PC-3 (cell line): ENCODE measurements at regions of chr5 and their contacts with region 1.

Region 1: DNA sequence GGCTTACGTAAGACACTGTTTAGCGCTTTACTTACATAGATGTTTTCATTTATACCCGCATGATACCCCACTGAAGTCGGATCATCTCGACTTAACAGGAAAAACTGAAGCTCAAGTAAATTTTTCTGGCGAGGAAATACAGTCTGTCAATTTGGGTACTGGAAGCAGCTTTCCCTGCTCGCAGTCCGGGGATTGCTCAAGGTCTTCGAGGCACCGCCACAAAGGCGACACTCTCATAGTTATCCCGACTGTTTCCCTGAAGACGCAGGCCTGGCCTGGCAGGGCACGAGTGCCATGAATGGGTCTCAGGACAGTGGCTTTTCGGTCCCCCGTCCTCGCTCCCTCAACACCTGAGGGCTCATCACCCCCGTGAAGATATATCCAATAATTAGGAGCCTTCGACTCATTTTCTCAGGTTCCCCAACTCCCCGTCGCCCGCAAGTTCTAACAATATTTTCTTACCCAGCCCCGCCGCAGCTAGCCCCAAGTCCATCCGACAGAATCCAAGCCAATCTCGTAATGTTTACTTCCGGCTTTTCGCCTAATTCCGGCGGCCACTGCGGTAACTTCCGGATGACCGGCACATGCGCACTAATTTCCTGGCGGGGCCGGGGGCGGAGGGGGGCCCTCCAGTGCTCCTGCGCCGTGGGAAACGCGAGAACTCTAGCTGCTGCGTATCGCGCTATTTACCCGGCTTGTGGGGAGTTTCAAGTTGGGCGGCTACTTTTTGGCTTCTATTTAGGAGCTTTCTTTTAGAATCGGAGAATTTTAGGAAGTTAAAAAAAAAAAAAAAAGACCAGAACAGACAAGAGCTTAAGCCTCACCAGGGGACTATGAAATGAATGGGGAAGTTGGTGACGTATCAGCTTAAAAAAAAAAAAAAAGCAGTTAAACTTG is at the start of gene SLU7:
- DNase-seq: peak; percentile 95
- ATAC-seq: peak; percentile 66
- H3K4me3 ChIP-seq: peak within 1 kb of the TSS; percentile 94
- H3K27ac ChIP-seq: peak within 1 kb of the TSS; percentile 60
- H3K4me1 ChIP-seq: peaks cover 27% of the 10 kb centered on the region
- H3K27me3 ChIP-seq: no peaks in the 10 kb centered on the region
- CTCF ChIP-seq: no peak
- total RNA-seq, gene SLU7: 20.6 and 33.3 TPM in 2 replicates

Region 2: GRCh38 chr5:160399402-160400353 is 19.1 kb before region 1 on chr5 and contains the start of gene FAM200C:
- CTCF ChIA-PET with region 1: no interaction called
- POLR2A ChIA-PET with region 1: interaction called, 11 read pairs
- intact Hi-C with region 1: no loop called
- DNase-seq: peak; percentile 92
- ATAC-seq: peak; percentile 86
- H3K4me3 ChIP-seq: peak within 1 kb of the TSS; percentile 81
- H3K27ac ChIP-seq: peak within 1 kb of the TSS; percentile 55
- H3K4me1 ChIP-seq: peaks cover 14% of the 10 kb centered on the region
- H3K27me3 ChIP-seq: no peaks in the 10 kb centered on the region
- CTCF ChIP-seq: no peak
- total RNA-seq, gene FAM200C: 1.5 and 2.6 TPM in 2 replicates

Region 3: GRCh38 chr5:160467555-160468362 is 49.0 kb after region 1 on chr5:
- CTCF ChIA-PET with region 1: no interaction called
- POLR2A ChIA-PET with region 1: interaction called, 8 read pairs
- intact Hi-C with region 1: loop called (anchors 5 kb)
- DNase-seq: peak; percentile 81
- ATAC-seq: peak; percentile 77
- H3K4me3 ChIP-seq: peak overlapping the region; percentile 55
- H3K27ac ChIP-seq: peak overlapping the region; percentile 82
- H3K4me1 ChIP-seq: peaks cover 68% of the 10 kb centered on the region
- H3K27me3 ChIP-seq: no peaks in the 10 kb centered on the region
- CTCF ChIP-seq: no peak